Right ventricle myocardium inferior (tissue), 1 donor: ENCODE measurements at regions of chr5 and their contacts with region 1.

Region 1: GRCh38 chr5:31186672-31187267 is 6.7 kb upstream of the CDH6 start:
- DNase-seq: no peak
- ATAC-seq: no peak

Region 2: DNA sequence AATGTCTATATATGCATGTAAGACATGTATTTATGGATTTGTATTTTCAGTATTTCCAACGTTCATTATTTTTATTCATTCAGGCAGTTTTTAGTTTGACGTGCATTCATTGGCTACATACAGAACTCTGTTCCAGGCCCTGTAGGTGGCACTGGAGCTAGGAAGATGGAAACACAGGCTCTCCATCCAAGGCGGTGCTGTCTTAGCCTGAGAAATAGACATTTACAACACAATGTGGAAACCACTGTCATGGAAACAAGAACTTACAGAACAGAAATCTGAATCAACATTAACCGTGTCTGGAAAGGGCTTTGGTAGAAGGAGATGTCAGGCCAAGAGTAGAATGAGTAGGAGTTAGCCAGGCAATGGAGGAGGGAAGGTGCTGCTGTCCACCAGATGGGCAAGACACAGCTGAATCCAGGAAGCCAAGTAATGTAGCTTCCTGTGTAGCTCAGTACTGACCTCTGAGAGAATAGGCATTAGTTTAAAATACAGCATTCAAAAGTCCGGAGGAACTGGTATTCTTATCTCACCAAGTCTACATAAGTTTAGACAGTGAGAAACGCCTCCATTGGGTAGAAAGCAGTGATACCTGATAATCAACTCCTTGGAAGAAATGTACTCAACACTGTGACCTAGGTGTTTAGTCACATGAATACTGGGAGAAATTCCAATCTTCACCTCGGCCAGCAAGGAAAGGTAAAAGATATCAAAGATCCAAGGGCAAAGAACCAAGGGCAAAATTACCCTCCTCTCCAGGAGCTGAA is 381.8 kb before region 1 on chr5:
- intact Hi-C with region 1: loop called (anchors 2 kb)
- DNase-seq: peak; percentile 53
- ATAC-seq: peak; percentile 69

Region 3: GRCh38 chr5:31096238-31096865 is 90.4 kb before region 1 on chr5:
- intact Hi-C with region 1: no loop called
- DNase-seq: no peak
- ATAC-seq: peak; percentile 34